Activated T-helper 1 cell treated with anti-CD3 and anti-CD28 coated beads, Interleukin-12 subunit alpha, Interleukin-12 subunit beta, Interleukin-2, Interleukin-4 antibody, amounts not matched to agents 30 ng/mL and 10 ng/mL and 1 ng/mL, durations not matched to agents 14 hours and 24 hours and 36 hours (primary cell): ENCODE measurements at regions of chr5 and their contacts with region 1.

Region 1: DNA sequence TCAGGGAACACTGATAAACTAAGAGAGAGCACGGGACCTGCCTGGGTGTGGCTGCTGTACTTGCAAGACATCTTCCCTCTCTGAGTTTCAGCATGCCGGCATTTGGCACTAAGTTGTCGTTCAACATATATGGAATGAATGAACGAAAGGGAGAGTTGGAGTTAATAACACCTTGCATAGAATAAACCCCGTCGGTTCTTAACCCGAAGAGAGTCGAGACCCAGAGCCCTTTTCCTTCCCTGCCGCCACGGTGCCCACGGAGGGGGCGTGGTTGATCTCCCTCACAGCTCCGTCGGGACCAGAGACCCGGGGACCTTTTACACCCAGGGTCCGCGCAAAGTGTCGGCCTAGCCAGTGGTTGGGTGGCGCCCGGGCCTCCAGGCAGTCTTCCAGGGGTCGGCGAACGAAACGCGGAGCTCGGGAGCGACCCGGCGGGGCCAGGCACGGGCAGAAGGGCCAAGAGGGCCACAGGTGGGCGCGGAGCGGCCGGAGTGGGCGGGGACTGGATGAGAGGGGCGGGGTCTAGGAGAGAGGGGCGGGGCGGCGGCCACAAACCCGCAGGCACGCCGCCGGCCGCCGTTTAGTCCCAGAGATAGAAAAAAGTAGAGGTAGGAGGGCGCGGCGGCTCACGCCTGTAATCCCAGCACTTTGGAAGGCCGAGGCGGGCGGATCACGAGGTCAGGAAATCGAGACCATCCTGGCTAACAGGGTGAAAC is 735 bp upstream of the RPL26L1 start:
- DNase-seq: peak; percentile 51
- H3K4me3 Mint-ChIP-seq: peak overlapping the region; percentile 99
- H3K27ac Mint-ChIP-seq: peak overlapping the region; percentile 98
- H3K4me1 Mint-ChIP-seq: peaks cover 27% of the 10 kb centered on the region
- H3K27me3 Mint-ChIP-seq: peaks cover 6% of the 10 kb centered on the region

Region 2: DNA sequence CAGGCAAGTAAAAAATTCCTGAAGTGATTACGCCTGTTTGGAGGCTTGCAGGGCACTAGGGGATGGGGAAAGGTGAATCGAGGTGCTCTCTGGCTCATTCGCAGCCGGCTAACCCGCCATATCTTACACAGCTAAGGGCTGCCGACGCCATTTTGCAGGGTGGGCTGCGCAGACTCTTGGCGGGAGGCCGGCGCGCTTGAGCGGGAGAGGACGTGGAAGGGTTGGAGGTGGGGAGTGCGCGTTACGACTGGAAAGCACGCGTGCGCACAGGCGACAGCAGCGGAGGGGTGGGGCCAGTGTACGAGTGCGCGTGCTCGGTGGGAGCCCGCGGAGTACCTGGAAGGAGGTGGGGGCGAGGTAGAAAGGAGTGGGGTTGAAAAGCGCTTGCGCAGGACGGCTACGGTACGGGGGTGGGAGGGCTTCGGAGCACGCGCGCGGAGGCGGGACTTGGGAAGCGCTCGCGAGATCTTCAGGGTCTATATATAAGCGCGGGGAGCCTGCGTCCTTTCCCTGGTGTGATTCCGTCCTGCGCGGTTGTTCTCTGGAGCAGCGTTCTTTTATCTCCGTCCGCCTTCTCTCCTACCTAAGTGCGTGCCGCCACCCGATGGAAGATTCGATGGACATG is 1571.0 kb before region 1 on chr5 and contains the start of gene NPM1:
- intact Hi-C with region 1: loop called (anchors 1 kb)
- DNase-seq: peak; percentile 97
- H3K4me3 Mint-ChIP-seq: peak within 1 kb of the TSS; percentile 97
- H3K27ac Mint-ChIP-seq: peak within 1 kb of the TSS; percentile 98
- H3K4me1 Mint-ChIP-seq: peaks cover 43% of the 10 kb centered on the region
- H3K27me3 Mint-ChIP-seq: peaks cover 8% of the 10 kb centered on the region
- total RNA-seq, gene NPM1: 2,729 and 2,809 TPM in 2 replicates

Region 3: GRCh38 chr5:172920447-172920849 is 38.0 kb before region 1 on chr5:
- intact Hi-C with region 1: no loop called
- DNase-seq: no peak
- H3K4me3 Mint-ChIP-seq: no peak overlapping the region
- H3K27ac Mint-ChIP-seq: no peak overlapping the region
- H3K4me1 Mint-ChIP-seq: no peaks in the 10 kb centered on the region
- H3K27me3 Mint-ChIP-seq: no peaks in the 10 kb centered on the region